ENCODE measurements at regions of chr10 and their contacts with region 1.

Region 1: GRCh38 chr10:3811291-3811870 is 26.4 kb upstream of the KLF6 start:
- DNase-seq: peak; percentile 61
- H3K4me3 Mint-ChIP-seq: peak overlapping the region; percentile 60
- H3K27ac Mint-ChIP-seq: peak overlapping the region; percentile 99
- H3K4me1 Mint-ChIP-seq: peaks cover 85% of the 10 kb centered on the region
- H3K27me3 Mint-ChIP-seq: no peaks in the 10 kb centered on the region

Region 2: DNA sequence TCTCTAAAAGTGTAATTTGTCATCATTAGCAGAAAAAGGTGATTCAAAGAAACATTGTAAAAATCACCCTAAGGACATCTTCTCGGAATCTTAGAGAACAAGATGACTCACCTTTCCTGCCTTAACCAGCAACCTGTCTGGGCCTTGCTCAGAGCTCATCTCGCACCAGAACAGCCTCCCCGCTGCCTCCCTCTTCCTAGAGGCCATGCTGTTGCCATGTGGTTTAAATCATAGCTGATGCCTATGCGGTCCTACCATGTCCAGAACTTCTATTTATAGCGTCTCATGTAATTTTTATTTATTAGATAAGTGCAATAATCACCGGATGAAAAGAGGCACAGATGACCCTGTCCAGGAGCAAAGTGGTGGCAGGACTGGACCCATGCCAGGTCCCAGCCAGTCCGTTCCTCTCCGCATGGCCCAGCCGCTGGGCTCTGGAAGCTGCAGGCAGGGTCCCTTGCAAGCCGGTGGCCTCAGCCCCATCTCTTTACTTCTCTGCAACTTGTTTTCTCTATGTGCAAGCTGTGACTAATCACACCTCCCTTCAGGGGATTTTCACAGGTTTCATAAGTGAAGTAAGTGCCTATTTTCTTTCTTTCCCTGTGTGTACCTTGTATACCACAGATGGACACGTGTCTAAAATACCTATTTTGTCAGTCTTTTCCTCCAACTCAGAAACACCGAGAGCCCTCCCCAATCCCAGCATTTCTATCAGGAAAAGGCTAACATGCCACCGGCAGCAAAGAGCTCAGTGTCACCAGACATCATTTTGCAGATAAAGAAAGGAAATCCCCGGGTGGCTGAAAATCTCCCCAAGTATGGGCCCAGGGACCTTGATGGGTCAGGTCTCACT is 53.5 kb before region 1 on chr10:
- intact Hi-C with region 1: loop called (anchors 1 kb)
- DNase-seq: peak; percentile 66
- H3K4me3 Mint-ChIP-seq: peak overlapping the region; percentile 78
- H3K27ac Mint-ChIP-seq: peak overlapping the region; percentile 100
- H3K4me1 Mint-ChIP-seq: peaks cover 84% of the 10 kb centered on the region
- H3K27me3 Mint-ChIP-seq: no peaks in the 10 kb centered on the region

Region 3: GRCh38 chr10:3769556-3769955 is 41.8 kb before region 1 on chr10:
- intact Hi-C with region 1: no loop called
- DNase-seq: no peak
- H3K4me3 Mint-ChIP-seq: no peak overlapping the region
- H3K27ac Mint-ChIP-seq: no peak overlapping the region
- H3K4me1 Mint-ChIP-seq: peaks cover 48% of the 10 kb centered on the region
- H3K27me3 Mint-ChIP-seq: no peaks in the 10 kb centered on the region

Region 4: DNA sequence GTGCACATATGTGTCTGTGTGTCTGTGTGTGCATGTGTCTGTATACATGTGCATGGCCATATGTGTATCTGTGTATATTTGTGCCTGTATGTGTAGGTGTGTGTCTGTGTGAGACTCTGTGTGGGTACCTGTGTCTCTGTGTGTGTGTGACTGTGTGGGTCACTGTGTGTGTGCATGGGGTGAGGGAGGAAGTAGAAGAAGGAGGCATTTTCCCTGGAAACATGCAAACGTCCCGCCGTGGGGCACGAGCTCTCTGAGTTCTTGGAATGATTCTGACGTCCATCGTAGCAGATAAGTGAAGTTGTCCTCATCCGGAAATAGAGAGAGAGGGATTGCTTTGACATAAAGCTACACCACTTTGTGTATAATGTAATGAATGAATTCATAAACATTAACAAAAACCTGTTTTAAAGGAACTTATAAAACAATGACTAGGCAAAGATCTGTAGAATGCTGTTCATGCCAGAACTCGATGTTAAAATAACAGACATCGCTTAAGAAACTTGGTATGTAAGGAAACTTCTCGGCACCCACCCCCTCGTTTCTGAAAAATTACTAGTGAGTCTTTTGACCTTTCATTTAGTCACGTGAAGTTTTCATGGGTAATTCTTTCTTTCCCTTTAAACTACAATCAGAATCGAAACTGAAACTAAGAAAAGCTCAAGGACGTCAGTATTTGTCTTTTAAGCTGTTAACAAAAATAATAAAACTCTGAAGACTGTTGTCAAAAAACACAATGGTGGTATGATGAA is 17.2 kb after region 1 on chr10:
- intact Hi-C with region 1: loop called (anchors 1 kb)
- DNase-seq: no peak
- H3K4me3 Mint-ChIP-seq: peak overlapping the region; percentile 58
- H3K27ac Mint-ChIP-seq: peak overlapping the region; percentile 93
- H3K4me1 Mint-ChIP-seq: peaks cover 57% of the 10 kb centered on the region
- H3K27me3 Mint-ChIP-seq: no peaks in the 10 kb centered on the region

Region 5: GRCh38 chr10:3867454-3868270 is 56.3 kb after region 1 on chr10:
- intact Hi-C with region 1: loop called (anchors 1 kb)
- DNase-seq: no peak
- H3K4me3 Mint-ChIP-seq: no peak overlapping the region
- H3K27ac Mint-ChIP-seq: peak overlapping the region; percentile 77
- H3K4me1 Mint-ChIP-seq: peaks cover 72% of the 10 kb centered on the region
- H3K27me3 Mint-ChIP-seq: no peaks in the 10 kb centered on the region

Region 6: DNA sequence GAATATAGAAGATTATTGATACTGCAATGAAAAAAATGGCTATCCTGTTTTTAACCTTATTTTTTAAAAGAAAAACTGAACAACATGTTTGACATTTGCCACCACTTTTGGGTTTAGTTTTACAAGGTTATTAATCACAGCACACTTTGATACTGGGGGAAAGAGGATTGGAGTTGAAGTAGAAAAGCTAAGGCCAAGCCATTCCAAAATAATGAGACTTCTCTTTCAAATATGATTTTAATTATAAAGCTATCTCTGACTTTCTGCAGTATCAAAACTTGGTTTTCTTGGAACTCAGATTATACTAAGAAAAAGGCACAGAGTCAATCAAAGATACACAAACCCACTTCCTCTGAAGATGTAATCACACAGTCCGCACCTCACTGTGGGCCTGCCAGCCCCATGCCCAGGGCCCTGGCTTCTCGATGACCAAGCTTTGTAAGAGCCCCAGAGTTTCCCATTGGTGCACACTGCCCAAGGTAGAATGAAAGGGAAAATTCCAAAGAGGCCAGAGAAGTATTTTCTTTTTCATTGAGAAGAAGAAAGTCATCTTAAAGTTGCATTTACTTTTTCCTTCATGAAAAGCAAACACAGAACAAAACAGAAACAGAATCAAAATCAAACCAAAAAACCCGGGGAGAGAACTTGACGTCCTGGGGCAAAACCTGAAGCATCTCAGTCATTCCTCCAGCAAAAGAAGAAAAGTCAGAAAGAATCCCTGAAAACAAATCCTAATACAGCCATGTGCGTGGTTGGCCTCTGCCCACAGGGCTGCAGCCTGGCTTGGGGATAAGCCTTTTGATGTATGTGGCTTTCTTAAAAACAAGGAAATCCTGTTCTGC is 161.3 kb after region 1 on chr10:
- intact Hi-C with region 1: loop called (anchors 1 kb)
- DNase-seq: peak; percentile 42
- H3K4me3 Mint-ChIP-seq: peak overlapping the region; percentile 79
- H3K27ac Mint-ChIP-seq: peak overlapping the region; percentile 98
- H3K4me1 Mint-ChIP-seq: peaks cover 42% of the 10 kb centered on the region
- H3K27me3 Mint-ChIP-seq: no peaks in the 10 kb centered on the region

Region 7: DNA sequence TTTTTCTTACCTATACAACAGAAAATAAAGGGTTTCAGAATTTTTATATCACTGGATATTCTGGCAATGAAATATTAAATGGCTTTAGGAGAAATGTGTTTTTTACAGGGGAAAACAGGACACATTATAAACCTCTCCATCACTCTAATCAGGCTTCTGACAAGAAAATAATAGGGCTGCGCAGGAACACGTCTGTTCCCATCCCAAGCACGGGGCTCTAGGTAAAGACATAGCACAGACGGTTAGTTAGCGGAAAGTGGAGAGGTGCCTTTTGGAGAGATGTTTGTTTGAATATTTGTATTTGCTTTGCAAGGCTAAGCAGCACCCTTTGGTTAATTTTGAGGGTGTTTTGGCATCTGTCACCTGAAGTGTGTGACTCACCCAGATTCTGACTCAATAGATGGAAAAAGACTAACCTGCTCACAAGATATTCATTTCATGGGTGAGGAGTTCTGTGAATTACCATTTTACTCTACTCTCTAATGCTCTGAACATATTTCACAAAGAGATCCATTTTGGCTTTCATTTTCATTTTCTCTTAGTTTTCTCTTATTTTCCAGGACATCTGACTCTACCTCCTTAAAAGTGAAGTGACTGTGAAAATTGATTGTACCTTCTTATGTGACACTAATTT is 840.1 kb after region 1 on chr10:
- intact Hi-C with region 1: loop called (anchors 1 kb)
- DNase-seq: no peak
- H3K4me3 Mint-ChIP-seq: peak overlapping the region; percentile 8
- H3K27ac Mint-ChIP-seq: peak overlapping the region; percentile 85
- H3K4me1 Mint-ChIP-seq: peaks cover 32% of the 10 kb centered on the region
- H3K27me3 Mint-ChIP-seq: peaks cover 3% of the 10 kb centered on the region

Measured in activated T-helper 1 cell treated with anti-CD3 and anti-CD28 coated beads, Interleukin-12 subunit alpha, Interleukin-12 subunit beta, Interleukin-2, Interleukin-4 antibody, amounts not matched to agents 30 ng/mL and 10 ng/mL and 1 ng/mL, durations not matched to agents 14 hours and 24 hours and 36 hours (primary cell).